MCF 10A (cell line): ENCODE measurements at regions of chr2 and their contacts with region 1.

Region 1: DNA sequence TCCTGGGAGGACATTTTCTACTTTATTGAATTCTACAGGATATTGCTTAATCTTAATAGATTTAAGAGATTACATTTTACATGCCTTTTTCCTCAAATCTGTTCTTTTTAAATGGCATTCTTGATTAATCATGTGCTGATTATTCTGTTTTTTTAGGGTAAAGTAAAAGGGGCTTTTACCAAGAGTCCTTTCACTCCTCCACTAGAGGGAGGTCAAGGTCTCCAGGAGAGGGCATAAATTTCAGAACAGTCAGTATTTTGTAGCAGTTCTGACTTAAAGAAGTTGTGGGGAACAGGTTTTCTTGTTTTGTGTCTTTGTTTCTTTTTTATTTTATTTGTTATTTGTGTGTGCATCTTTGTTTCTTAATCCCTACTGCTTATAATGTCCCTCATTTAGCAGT is 25.4 kb downstream of the WDR75 start:
- DNase-seq: peak; percentile 14
- H3K4me3 Mint-ChIP-seq: no peak overlapping the region
- H3K27ac Mint-ChIP-seq: no peak overlapping the region
- H3K4me1 Mint-ChIP-seq: no peaks in the 10 kb centered on the region
- H3K27me3 Mint-ChIP-seq: no peaks in the 10 kb centered on the region
- CTCF ChIP-seq: peak; percentile 41

Region 2: DNA sequence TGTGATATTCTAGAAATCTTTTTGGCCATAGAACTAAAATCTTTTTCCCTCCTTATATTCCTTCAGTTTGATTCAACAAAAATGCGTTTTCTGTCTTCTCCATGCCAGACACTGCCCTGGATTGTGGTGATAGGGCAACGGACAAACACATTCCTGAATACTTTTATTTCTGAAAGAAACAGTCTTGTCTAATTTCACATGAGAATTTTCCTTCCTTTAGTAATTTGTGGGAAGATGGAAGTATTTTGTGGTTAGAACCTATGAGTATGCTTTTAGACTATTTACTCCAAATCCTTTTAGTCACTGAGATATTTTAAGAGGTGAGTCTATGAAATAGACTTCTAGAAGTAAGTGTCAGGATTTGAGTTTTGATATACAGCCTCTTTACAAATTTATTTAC is 336.7 kb before region 1 on chr2:
- CTCF ChIA-PET with region 1: no interaction called
- POLR2A ChIA-PET with region 1: no interaction called
- intact Hi-C with region 1: no loop called
- DNase-seq: no peak
- H3K4me3 Mint-ChIP-seq: no peak overlapping the region
- H3K27ac Mint-ChIP-seq: no peak overlapping the region
- H3K4me1 Mint-ChIP-seq: no peaks in the 10 kb centered on the region
- H3K27me3 Mint-ChIP-seq: no peaks in the 10 kb centered on the region
- CTCF ChIP-seq: no peak

Region 3: GRCh38 chr2:189633392-189633811 is 166.7 kb after region 1 on chr2:
- CTCF ChIA-PET with region 1: interaction called, 4 read pairs
- POLR2A ChIA-PET with region 1: no interaction called
- intact Hi-C with region 1: loop called (anchors 5 kb)
- DNase-seq: peak; percentile 34
- H3K4me3 Mint-ChIP-seq: no peak overlapping the region
- H3K27ac Mint-ChIP-seq: no peak overlapping the region
- H3K4me1 Mint-ChIP-seq: no peaks in the 10 kb centered on the region
- H3K27me3 Mint-ChIP-seq: no peaks in the 10 kb centered on the region
- CTCF ChIP-seq: no peak

Region 4: GRCh38 chr2:190511104-190511503 is 1044.4 kb after region 1 on chr2:
- CTCF ChIA-PET with region 1: no interaction called
- POLR2A ChIA-PET with region 1: no interaction called
- intact Hi-C with region 1: no loop called
- DNase-seq: peak; percentile 39
- H3K4me3 Mint-ChIP-seq: no peak overlapping the region
- H3K27ac Mint-ChIP-seq: no peak overlapping the region
- H3K4me1 Mint-ChIP-seq: peaks cover 6% of the 10 kb centered on the region
- H3K27me3 Mint-ChIP-seq: no peaks in the 10 kb centered on the region
- CTCF ChIP-seq: peak; percentile 27